Left ventricle myocardium superior (tissue), 1 donor: ENCODE measurements at regions of chr6 and their contacts with region 1.

Region 1: DNA sequence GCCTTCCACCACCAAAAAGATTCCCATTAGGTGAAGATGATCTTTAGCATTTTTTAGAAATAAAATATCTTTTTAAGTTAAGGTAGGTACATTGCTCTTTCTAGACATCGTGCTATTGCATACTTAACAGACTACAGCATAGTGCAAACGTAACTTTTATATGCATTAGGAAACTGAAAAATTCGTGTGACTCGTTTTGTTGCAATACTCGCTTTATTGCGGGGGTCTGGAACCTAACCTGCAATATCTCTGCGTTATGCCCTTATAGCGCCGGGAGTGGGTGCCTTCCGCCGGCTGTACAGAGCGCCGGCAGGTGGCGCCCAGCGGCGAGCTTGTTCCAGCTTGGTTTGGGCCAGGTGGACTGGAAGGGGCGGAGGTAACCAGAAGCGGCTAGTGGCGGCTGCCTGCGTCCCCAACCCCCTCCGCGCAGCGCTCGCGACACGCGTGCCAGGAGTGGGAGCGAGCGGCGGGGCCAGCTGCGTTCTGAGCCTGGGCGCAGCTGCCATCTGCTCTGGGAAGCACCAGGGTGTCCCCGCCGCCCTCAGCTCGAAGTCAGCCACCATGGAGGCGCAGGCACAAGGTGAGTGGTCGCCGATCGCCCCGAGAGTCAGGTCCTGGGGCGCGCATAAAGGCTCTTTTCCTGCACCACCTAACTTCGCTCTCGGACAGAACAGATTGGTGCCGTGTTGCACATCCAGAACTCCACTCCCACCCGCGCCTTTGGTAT is at the start of gene TPD52L1:
- DNase-seq: peak; percentile 89
- ATAC-seq: peak; percentile 97
- total RNA-seq, gene TPD52L1: 57.8 TPM

Region 2: GRCh38 chr6:124604719-124605118 is 548.8 kb before region 1 on chr6:
- intact Hi-C with region 1: no loop called
- DNase-seq: no peak
- ATAC-seq: no peak

Region 3: DNA sequence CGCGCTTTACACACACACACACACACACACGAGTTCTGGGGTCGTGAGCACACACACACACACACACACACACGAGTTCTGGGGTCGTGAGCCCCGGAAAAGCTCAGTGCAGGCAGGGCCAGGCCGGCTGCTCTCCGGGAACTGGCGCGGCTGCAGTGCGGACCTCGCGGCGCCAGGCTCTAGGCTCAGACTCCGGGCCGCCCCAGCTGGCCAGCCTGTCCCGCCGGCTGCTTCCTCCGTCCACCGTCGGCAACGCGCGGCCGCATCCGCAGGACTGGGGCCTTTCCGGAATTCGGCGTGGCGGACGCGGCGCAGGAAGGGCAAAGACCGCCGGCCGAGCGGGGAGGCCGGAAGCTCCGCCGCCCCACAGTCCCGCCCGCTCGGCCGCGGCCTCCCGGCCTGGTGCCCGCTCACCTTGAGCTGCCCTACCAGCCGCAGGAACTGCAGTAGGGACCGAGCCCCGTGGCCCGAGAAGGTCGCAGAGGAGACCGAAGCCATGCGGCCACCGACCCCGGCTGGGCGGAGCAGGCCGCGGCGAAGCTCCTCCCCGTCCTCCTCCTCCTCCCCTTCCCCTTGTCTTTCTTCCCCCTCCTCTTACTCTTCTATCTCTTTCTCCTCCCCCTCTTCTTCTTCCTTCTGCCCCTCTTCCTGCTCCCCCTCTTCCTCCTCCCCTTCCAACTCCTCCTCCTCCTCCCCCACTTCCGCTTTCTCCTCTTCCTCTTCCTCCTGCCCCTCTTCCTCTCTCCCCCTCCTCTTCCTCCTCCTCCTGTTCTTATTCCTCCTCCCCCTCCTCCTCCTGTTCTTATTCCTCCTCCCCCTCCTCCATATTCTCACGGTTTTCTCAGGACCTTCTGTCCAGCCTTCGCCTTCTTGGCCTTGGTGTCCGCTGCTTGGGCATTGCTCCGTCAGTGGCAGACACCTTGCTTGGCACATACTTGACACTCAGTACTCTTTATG is 148.2 kb after region 1 on chr6 and contains the start of gene HDDC2:
- intact Hi-C with region 1: loop called (anchors 5 kb)
- DNase-seq: peak; percentile 88
- ATAC-seq: peak; percentile 92
- total RNA-seq, gene HDDC2: 92.0 TPM